ENCODE measurements at regions of chr14 and their contacts with region 1.

Region 1: DNA sequence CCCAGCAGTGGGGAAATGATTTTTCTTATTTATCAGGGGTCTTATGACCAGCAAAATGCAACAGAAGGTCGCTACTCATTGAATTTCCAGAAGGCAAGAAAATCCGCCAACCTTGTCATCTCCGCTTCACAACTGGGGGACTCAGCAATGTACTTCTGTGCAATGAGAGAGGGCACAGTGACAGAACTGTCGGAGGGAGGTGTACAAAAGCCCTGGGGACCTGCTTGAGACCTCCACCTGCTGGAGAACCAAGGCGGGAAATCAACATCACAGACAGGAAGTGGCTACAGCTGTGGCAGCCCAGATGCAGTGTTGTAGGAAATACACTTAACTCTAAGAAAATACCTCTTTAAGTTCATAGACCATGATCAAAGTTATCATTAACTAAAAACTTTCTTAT is 250.9 kb upstream of the OR4E1 start:
- DNase-seq: peak; percentile 73
- H3K4me3 Mint-ChIP-seq: peak overlapping the region; percentile 50
- H3K27ac Mint-ChIP-seq: peak overlapping the region; percentile 88
- H3K4me1 Mint-ChIP-seq: peaks cover 43% of the 10 kb centered on the region
- H3K27me3 Mint-ChIP-seq: no peaks in the 10 kb centered on the region

Region 2: GRCh38 chr14:21894003-21894897 is 30.2 kb before region 1 on chr14:
- CTCF ChIA-PET with region 1: no interaction called
- POLR2A ChIA-PET with region 1: no interaction called
- intact Hi-C with region 1: no loop called
- DNase-seq: peak; percentile 73
- H3K4me3 Mint-ChIP-seq: peak overlapping the region; percentile 80
- H3K27ac Mint-ChIP-seq: peak overlapping the region; percentile 89
- H3K4me1 Mint-ChIP-seq: peaks cover 25% of the 10 kb centered on the region
- H3K27me3 Mint-ChIP-seq: no peaks in the 10 kb centered on the region

Region 3: GRCh38 chr14:21940887-21941856 is 16.7 kb after region 1 on chr14:
- CTCF ChIA-PET with region 1: interaction called, 5 read pairs
- POLR2A ChIA-PET with region 1: no interaction called
- intact Hi-C with region 1: loop called (anchors 2 kb)
- DNase-seq: peak; percentile 51
- H3K4me3 Mint-ChIP-seq: peak overlapping the region; percentile 60
- H3K27ac Mint-ChIP-seq: peak overlapping the region; percentile 75
- H3K4me1 Mint-ChIP-seq: peaks cover 17% of the 10 kb centered on the region
- H3K27me3 Mint-ChIP-seq: peaks cover 5% of the 10 kb centered on the region

Region 4: GRCh38 chr14:21964180-21964579 is 39.7 kb after region 1 on chr14:
- CTCF ChIA-PET with region 1: interaction called, 4 read pairs
- POLR2A ChIA-PET with region 1: no interaction called
- intact Hi-C with region 1: loop called (anchors 5 kb)
- DNase-seq: no peak
- H3K4me3 Mint-ChIP-seq: no peak overlapping the region
- H3K27ac Mint-ChIP-seq: peak overlapping the region; percentile 4
- H3K4me1 Mint-ChIP-seq: peaks cover 17% of the 10 kb centered on the region
- H3K27me3 Mint-ChIP-seq: no peaks in the 10 kb centered on the region

Measured in activated CD4-positive, alpha-beta memory T cell treated with anti-CD3 and anti-CD28 coated beads for 36 hours (primary cell).